CD8-positive, alpha-beta memory T cell (primary cell): ENCODE measurements at regions of chr14 and their contacts with region 1.

Region 1: GRCh38 chr14:97213720-97214119 is 416.5 kb downstream of the VRK1 start:
- DNase-seq: no peak
- H3K4me3 ChIP-seq: no peak overlapping the region
- H3K4me3 Mint-ChIP-seq: no peak overlapping the region
- H3K27ac ChIP-seq: no peak overlapping the region
- H3K27ac Mint-ChIP-seq: no peak overlapping the region
- H3K4me1 ChIP-seq: no peaks in the 10 kb centered on the region
- H3K4me1 Mint-ChIP-seq: peaks cover 17 to 21% (median 17%) of the 10 kb centered on the region in 3 donors
- H3K27me3 ChIP-seq: no peaks in the 10 kb centered on the region
- H3K27me3 Mint-ChIP-seq: peaks cover 0 to 6% of the 10 kb centered on the region in 2 donors

Region 2: GRCh38 chr14:97297100-97297499 is 83.4 kb after region 1 on chr14:
- CTCF ChIA-PET with region 1: no interaction called
- POLR2A ChIA-PET with region 1: interaction called, 10 read pairs
- DNase-seq: no peak
- H3K4me3 ChIP-seq: no peak overlapping the region
- H3K4me3 Mint-ChIP-seq: peak overlapping the region in 1 of 7 donors; percentile 18
- H3K27ac ChIP-seq: no peak overlapping the region
- H3K27ac Mint-ChIP-seq: no peak overlapping the region
- H3K4me1 ChIP-seq: no peaks in the 10 kb centered on the region
- H3K4me1 Mint-ChIP-seq: peaks cover 15 to 25% (median 17%) of the 10 kb centered on the region in 3 donors
- H3K27me3 ChIP-seq: no peaks in the 10 kb centered on the region
- H3K27me3 Mint-ChIP-seq: peaks cover 8 to 17% of the 10 kb centered on the region in 2 donors